Endothelial cell of umbilical vein (primary cell): ENCODE measurements at regions of chr5 and their contacts with region 1.

Region 1: GRCh38 chr5:67246108-67246507 is 49.5 kb upstream of the CD180 start:
- DNase-seq: peak; percentile 77
- H3K4me3 ChIP-seq: no peak overlapping the region
- H3K27ac ChIP-seq: no peak overlapping the region
- H3K4me1 ChIP-seq: peaks cover 33% of the 10 kb centered on the region
- H3K27me3 ChIP-seq: no peaks in the 10 kb centered on the region
- CTCF ChIP-seq: peak; percentile 34 to 35
- POLR2A ChIP-seq: no peak

Region 2: GRCh38 chr5:66828548-66829357 is 417.4 kb before region 1 on chr5:
- CTCF ChIA-PET with region 1: no interaction called
- POLR2A ChIA-PET with region 1: no interaction called
- dilution Hi-C with region 1: no loop called
- intact Hi-C with region 1: no loop called
- DNase-seq: peak; percentile 92
- H3K4me3 ChIP-seq: peak overlapping the region; percentile 54 to 70 (median 55)
- H3K27ac ChIP-seq: peak overlapping the region; percentile 91
- H3K4me1 ChIP-seq: peaks cover 22% of the 10 kb centered on the region
- H3K27me3 ChIP-seq: no peaks in the 10 kb centered on the region
- CTCF ChIP-seq: no peak
- POLR2A ChIP-seq: peak; percentile 95

Region 3: GRCh38 chr5:67202828-67203227 is 43.3 kb before region 1 on chr5:
- CTCF ChIA-PET with region 1: no interaction called
- POLR2A ChIA-PET with region 1: no interaction called
- dilution Hi-C with region 1: no loop called
- intact Hi-C with region 1: no loop called
- DNase-seq: no peak
- H3K4me3 ChIP-seq: no peak overlapping the region
- H3K27ac ChIP-seq: no peak overlapping the region
- H3K4me1 ChIP-seq: peaks cover 6% of the 10 kb centered on the region
- H3K27me3 ChIP-seq: no peaks in the 10 kb centered on the region
- CTCF ChIP-seq: no peak
- POLR2A ChIP-seq: no peak

Region 4: GRCh38 chr5:67301285-67301903 is 55.3 kb after region 1 on chr5:
- CTCF ChIA-PET with region 1: interaction called, 23 read pairs
- POLR2A ChIA-PET with region 1: no interaction called
- dilution Hi-C with region 1: no loop called
- intact Hi-C with region 1: loop called (anchors 2 kb)
- DNase-seq: peak; percentile 88
- H3K4me3 ChIP-seq: no peak overlapping the region
- H3K27ac ChIP-seq: peak overlapping the region; percentile 90
- H3K4me1 ChIP-seq: peaks cover 56% of the 10 kb centered on the region
- H3K27me3 ChIP-seq: no peaks in the 10 kb centered on the region
- CTCF ChIP-seq: no peak
- POLR2A ChIP-seq: peak; percentile 20

Region 5: GRCh38 chr5:67528953-67529352 is 282.8 kb after region 1 on chr5:
- CTCF ChIA-PET with region 1: interaction called, 3 read pairs
- POLR2A ChIA-PET with region 1: no interaction called
- dilution Hi-C with region 1: no loop called
- intact Hi-C with region 1: loop called (anchors 5 kb)
- DNase-seq: no peak
- H3K4me3 ChIP-seq: no peak overlapping the region
- H3K27ac ChIP-seq: no peak overlapping the region
- H3K4me1 ChIP-seq: no peaks in the 10 kb centered on the region
- H3K27me3 ChIP-seq: no peaks in the 10 kb centered on the region
- CTCF ChIP-seq: no peak
- POLR2A ChIP-seq: no peak

Region 6: DNA sequence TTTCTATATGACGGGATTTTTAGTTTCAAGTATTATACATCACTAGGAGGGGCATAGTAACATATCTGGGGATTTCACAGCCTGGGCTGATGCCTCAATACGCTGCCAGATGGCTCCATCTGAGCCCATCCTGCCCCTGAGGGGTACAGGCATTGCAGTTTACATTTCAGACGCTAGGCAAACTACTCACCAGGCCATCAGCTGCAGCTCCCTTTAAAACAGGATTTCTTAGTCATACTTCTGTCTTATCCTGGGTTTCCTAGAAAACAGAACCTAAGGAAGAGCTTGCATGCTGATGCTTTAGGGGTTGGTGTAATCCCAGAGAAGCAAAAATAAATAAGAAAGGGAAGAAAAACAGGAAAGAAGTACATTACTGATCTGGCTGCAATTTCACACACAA is 596.7 kb after region 1 on chr5:
- CTCF ChIA-PET with region 1: interaction called, 10 read pairs
- POLR2A ChIA-PET with region 1: no interaction called
- dilution Hi-C with region 1: no loop called
- intact Hi-C with region 1: loop called (anchors 10 kb)
- DNase-seq: peak; percentile 40
- H3K4me3 ChIP-seq: no peak overlapping the region
- H3K27ac ChIP-seq: no peak overlapping the region
- H3K4me1 ChIP-seq: peaks cover 7% of the 10 kb centered on the region
- H3K27me3 ChIP-seq: no peaks in the 10 kb centered on the region
- CTCF ChIP-seq: peak; percentile 20 to 25
- POLR2A ChIP-seq: no peak

Region 7: GRCh38 chr5:68215208-68215897 is 969.2 kb after region 1 on chr5 and contains the start of gene PIK3R1:
- CTCF ChIA-PET with region 1: interaction called, 22 read pairs
- POLR2A ChIA-PET with region 1: no interaction called
- dilution Hi-C with region 1: no loop called
- intact Hi-C with region 1: loop called (anchors 1 kb)
- DNase-seq: peak; percentile 96
- H3K4me3 ChIP-seq: peak within 1 kb of the TSS; percentile 52 to 91 (median 91)
- H3K27ac ChIP-seq: peak within 1 kb of the TSS; percentile 93
- H3K4me1 ChIP-seq: peaks cover 17% of the 10 kb centered on the region
- H3K27me3 ChIP-seq: no peaks in the 10 kb centered on the region
- CTCF ChIP-seq: peak; percentile 32 to 49
- POLR2A ChIP-seq: peak; percentile 93
- total RNA-seq, gene PIK3R1: 27.5 and 30.0 TPM in 2 replicates

Region 8: DNA sequence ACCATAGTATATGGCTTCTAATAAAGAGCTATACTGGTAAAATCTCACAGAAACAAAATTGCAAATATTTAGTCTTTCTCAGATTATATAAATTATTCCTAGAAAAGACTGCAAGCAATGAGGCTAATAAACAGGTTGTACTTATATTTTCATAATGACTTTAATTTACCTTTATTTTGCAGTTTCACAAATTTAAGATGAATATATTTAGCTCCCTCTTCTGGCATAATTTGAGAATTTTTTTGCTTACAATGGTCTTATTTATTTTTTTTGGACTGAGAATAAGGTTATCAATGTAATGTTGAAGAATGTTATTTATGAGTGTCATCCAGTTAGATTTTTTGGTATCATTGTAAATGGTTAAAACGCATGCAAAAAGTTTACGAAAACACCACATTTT is 1026.2 kb after region 1 on chr5:
- CTCF ChIA-PET with region 1: interaction called, 54 read pairs
- POLR2A ChIA-PET with region 1: no interaction called
- dilution Hi-C with region 1: no loop called
- intact Hi-C with region 1: loop called (anchors 2 kb)
- DNase-seq: peak; percentile 32
- H3K4me3 ChIP-seq: no peak overlapping the region
- H3K27ac ChIP-seq: no peak overlapping the region
- H3K4me1 ChIP-seq: no peaks in the 10 kb centered on the region
- H3K27me3 ChIP-seq: no peaks in the 10 kb centered on the region
- CTCF ChIP-seq: peak in 1 of 2 donors; percentile 15
- POLR2A ChIP-seq: no peak